Activated CD4-positive, alpha-beta memory T cell treated with anti-CD3 and anti-CD28 coated beads, Interleukin-2, amount 10 ng/mL, durations not matched to agents 7 days and 5 days (primary cell): ENCODE measurements at regions of chr2 and their contacts with region 1.

Region 1: DNA sequence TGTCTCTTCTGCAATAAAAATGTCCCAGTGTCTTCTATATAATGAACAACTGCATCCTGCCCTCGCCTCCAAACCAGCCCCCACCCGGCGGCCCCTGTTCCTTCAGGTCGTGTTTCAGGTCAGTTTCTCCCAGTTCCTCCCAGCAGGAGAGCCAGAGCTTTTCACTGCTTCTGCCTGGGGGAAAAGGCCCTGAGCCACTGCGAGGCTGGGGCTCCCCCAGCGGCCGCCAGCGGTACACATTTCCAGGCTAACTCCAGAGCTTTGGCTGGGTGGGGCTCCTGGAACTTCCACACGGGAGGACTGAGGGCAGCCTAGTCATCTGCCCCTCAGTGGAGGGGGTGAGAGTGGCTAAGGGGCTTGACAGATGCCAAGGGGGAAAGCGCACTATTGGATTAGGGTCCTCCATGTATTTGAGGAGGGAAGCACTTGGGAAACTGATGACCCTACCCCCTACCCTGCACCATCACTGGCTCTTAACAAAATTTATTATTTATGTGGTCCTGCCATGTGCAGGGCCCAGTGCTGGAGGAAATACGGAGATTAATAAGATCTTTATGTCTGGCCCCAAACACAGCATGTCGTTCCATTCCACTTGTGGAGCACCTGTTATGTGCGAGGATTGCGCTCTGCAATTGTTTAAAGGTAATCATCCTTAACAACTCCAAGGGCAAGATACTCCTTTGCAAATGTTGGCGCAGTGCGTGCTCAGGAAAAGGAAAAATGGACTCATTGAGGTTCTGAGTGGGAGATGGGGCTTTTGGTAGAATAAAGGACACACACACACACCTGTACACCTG is 17.3 kb upstream of the CYS1 start:
- DNase-seq: peak; percentile 41
- H3K4me3 Mint-ChIP-seq: no peak overlapping the region
- H3K27ac Mint-ChIP-seq: no peak overlapping the region
- H3K4me1 Mint-ChIP-seq: peaks cover 6% of the 10 kb centered on the region
- H3K27me3 Mint-ChIP-seq: peaks cover 28% of the 10 kb centered on the region

Region 2: DNA sequence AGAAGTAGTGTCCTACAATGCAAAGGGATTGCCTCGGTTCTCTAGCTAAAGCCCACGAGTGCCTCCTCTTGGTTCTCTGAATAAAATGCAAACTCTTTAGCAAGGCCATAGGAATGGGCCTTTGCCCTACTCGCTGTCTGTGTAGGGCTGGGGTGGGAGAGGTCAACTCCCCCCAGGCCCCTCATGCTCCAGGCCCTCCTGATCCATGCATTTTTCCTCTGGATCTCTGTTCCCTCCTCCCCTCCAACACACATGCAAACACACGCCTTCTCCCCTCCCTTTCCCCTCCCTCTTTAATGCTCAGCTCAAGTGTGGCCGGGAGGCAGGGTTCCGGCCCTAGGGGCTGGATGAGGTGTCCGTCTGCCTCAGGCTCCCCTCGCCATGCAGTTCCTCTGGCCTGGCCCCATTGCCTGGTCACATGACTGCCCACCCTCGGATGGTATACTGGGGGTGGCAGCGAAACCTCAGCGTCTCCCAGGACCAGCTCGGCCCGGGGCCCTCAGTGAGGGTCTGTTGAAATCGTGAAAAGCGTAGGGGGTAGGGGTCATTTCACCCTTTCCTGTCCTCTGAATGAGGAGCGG is 69.1 kb before region 1 on chr2:
- CTCF ChIA-PET with region 1: no interaction called
- POLR2A ChIA-PET with region 1: no interaction called
- DNase-seq: no peak
- H3K4me3 Mint-ChIP-seq: no peak overlapping the region
- H3K27ac Mint-ChIP-seq: peak overlapping the region; percentile 79
- H3K4me1 Mint-ChIP-seq: peaks cover 34% of the 10 kb centered on the region
- H3K27me3 Mint-ChIP-seq: no peaks in the 10 kb centered on the region

Region 3: DNA sequence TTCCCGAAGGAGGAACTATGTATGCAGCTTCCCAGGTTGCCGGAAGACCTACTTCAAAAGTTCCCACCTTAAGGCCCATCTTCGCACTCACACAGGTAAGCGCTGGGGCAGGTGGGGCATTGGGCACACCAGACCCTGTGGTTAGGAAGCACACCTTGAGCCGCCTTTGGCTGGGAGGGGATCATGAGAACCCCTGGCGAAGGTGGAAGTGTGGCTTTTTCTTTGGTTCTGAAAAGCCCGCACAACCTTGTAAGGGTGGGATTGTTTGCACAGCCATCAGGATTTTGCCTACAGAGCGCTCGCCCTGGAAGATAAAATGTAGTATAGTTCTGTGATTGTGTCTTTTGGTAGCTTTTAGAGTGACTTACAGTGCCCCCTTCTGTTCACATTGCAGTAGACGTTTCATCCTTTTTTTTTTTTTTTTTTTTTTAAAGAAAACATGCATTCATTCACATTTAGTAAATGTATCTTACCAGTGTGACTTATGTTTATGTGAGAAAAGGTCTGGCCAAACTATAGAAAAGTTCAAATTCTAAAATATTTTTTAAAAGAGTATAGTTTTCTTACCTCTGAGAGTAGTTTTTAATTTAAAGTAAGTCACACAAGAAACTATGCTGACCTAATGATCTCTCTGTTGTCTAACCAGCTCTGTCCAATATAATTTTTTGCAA is 48.9 kb before region 1 on chr2:
- CTCF ChIA-PET with region 1: no interaction called
- POLR2A ChIA-PET with region 1: no interaction called
- DNase-seq: no peak
- H3K4me3 Mint-ChIP-seq: no peak overlapping the region
- H3K27ac Mint-ChIP-seq: no peak overlapping the region
- H3K4me1 Mint-ChIP-seq: peaks cover 30% of the 10 kb centered on the region
- H3K27me3 Mint-ChIP-seq: no peaks in the 10 kb centered on the region

Region 4: GRCh38 chr2:10064932-10065772 is 32.4 kb before region 1 on chr2:
- CTCF ChIA-PET with region 1: interaction called, 100 read pairs
- POLR2A ChIA-PET with region 1: no interaction called
- DNase-seq: no peak
- H3K4me3 Mint-ChIP-seq: no peak overlapping the region
- H3K27ac Mint-ChIP-seq: no peak overlapping the region
- H3K4me1 Mint-ChIP-seq: peaks cover 10% of the 10 kb centered on the region
- H3K27me3 Mint-ChIP-seq: peaks cover 5% of the 10 kb centered on the region

Region 5: DNA sequence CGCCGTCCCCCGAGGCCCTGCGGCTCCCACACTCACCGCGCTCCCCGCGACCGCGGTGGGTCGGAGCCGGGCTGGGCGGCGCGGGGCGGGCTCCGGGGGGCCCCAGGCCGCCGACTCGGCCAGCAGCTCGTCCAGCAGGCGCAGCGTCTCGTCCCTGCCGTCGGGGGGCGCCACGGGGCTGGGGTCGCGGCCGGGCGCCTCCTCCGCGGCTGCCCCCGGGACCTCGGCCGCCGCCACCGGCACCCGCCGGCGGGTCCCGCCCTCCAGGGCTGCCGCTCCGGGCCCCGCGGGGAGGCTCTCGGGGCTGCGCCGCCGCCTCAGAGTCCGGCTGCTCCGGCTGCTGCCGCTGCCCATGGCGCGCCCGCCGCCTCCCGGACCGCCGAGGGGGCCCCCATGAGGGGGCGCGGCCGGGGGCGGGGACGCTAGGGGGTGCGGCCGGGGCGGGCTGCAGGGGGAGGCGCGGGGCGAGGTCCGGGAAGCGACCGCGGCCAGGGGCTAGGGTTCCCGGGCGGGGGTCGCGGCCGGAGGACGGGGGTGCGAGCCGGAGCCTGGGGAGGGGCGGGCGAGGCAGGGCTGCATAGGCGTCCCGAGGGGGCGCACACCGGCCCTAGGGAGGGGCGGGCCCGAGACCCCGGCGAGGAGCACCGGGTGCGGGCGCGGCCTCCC is 17.5 kb before region 1 on chr2 and contains the start of gene CYS1:
- CTCF ChIA-PET with region 1: interaction called, 100 read pairs
- POLR2A ChIA-PET with region 1: interaction called, 6 read pairs
- DNase-seq: peak; percentile 31
- H3K4me3 Mint-ChIP-seq: peak within 1 kb of the TSS; percentile 72
- H3K27ac Mint-ChIP-seq: no peak within 1 kb of the TSS
- H3K4me1 Mint-ChIP-seq: peaks cover 23% of the 10 kb centered on the region
- H3K27me3 Mint-ChIP-seq: peaks cover 74% of the 10 kb centered on the region
- total RNA-seq, gene CYS1: 0.40 to 0.71 TPM